HEK293 (cell line): ENCODE measurements at regions of chr14 and their contacts with region 1.

Region 1: GRCh38 chr14:50542941-50543418 is 10.6 kb upstream of the MAP4K5 start:
- H3K4me3 ChIP-seq: no peak overlapping the region
- H3K27ac ChIP-seq: no peak overlapping the region
- H3K4me1 ChIP-seq: no peaks in the 10 kb centered on the region
- CTCF ChIP-seq: peak; percentile 36; the same call in 1 of the 2 replicates

Region 2: GRCh38 chr14:50249136-50249800 is 293.7 kb before region 1 on chr14:
- CTCF ChIA-PET with region 1: no interaction called
- POLR2A ChIA-PET with region 1: no interaction called
- H3K4me3 ChIP-seq: no peak overlapping the region
- H3K27ac ChIP-seq: no peak overlapping the region
- H3K4me1 ChIP-seq: no peaks in the 10 kb centered on the region
- CTCF ChIP-seq: no peak

Region 3: DNA sequence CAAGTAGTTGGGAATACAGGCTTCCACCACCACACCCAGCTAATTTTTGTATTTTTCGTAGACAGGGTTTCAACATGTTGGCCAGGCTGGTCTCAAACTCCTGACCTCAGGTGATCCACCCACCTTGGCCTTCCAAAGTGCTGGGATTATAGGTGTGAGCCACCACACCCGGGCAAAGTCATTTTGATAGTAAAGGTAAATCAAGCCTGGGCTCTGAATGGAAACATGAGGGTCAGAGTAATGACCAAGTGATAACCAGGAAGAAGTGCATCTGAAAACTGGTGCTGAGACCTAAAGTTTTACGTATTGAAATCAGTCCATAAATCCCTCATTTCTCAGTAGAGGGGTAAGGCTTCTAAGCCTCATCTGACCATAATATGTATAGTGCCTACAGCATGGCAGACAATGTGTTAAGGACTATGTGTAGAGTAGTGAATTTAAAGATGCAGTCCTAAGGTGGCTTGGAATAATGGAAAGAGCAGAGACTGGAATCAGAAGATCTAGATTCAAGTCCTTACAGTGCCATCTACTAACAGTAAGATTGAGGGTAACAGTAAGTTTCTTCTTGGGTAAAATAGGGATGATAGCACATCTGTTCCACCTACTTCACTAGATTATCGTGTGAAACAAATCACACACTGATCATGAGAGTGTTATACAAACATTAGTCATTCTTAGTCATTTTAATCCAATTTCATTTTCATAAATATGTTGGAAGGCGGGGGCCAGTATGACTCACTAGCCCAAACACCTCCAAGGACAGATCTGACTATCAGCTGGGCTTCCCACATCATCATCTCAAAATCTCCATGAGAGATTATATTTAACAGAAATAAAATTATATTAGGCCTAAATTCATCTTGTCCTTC is 21.8 kb before region 1 on chr14:
- CTCF ChIA-PET with region 1: no interaction called
- POLR2A ChIA-PET with region 1: no interaction called
- H3K4me3 ChIP-seq: no peak overlapping the region
- H3K27ac ChIP-seq: peak overlapping the region; percentile 34; the same call in 1 of the 2 replicates
- H3K4me1 ChIP-seq: peaks cover 9% of the 10 kb centered on the region
- CTCF ChIP-seq: no peak

Region 4: DNA sequence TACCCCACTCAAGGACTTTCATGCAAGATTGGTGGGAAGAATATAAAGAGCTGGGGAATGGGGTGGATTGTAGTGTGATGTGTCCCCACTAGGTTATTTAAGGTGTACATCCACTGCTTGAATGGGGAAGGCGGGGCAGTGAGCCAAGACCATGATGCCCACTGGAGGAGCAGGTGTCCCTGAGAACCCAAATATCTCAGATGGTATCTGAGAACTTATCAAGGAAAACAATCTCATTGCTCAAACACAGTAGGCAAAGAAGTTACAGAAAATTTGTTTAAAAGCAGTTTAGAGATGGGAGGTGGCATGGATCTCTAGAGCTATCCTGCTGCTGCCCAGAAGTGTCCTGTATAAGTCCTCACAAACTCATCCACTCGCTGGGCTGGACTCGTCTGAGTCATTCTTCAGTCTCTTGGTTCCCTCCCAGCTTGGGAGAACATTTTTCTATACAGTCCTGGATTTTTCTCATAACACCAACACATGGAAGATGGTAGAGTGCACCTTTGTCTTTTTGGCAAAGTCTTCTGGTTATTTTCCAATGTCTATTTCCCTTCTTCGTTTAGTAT is 11.5 kb after region 1 on chr14:
- CTCF ChIA-PET with region 1: interaction called, 13 read pairs
- POLR2A ChIA-PET with region 1: no interaction called
- H3K4me3 ChIP-seq: no peak overlapping the region
- H3K27ac ChIP-seq: no peak overlapping the region
- H3K4me1 ChIP-seq: peaks cover 7% of the 10 kb centered on the region
- CTCF ChIP-seq: no peak

Region 5: DNA sequence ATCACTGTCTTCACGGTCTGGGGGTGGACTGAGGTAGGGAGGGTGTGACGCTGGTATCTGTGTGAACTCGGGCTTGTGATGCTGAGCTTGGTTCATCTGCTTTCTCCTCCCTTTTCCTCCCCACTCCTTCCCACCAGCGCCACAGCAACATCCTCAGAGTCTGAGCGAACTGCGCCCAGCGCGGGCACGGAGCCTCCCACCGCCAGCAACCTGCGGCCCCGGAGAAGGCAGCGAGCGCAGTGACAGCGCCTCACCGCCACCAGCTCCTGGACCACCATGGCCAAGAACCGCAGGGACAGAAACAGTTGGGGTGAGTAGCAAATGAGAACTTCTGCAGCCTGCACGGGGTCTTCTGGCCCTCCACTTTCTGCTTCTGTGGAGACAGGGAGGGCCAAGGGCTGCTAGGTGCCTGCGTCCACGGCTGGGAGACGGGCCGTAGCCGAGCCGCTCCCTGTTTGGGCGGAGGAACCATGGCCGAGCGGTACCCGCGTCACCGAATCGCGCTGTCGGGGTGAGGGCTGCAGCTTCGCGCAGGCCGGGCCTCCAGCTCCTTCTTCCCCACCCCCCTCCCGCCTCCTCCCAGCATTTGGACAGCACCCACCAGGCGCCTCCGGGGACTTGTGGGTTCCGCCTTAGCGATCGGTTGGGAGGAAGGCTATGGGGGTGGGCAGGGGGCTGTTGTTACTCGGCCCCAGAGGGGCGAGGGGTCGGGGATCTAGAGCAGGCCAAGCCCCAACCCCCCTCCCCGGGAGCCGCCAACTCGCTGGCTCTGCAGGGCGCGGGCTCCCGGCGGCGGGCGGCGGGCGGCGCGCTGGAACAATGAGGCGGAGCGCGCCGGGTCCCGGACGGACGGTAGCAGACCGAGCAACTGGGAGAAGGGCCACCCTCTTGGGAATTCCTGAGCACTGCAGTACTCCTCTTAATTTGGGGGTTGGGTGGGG is 17.3 kb after region 1 on chr14 and contains the start of gene ATL1:
- CTCF ChIA-PET with region 1: interaction called, 13 read pairs
- POLR2A ChIA-PET with region 1: interaction called, 5 read pairs
- H3K4me3 ChIP-seq: peak within 1 kb of the TSS; percentile 77
- H3K27ac ChIP-seq: peak within 1 kb of the TSS; percentile 88
- H3K4me1 ChIP-seq: peaks cover 15% of the 10 kb centered on the region
- CTCF ChIP-seq: no peak; the same call in none of the 2 replicates

Region 6: GRCh38 chr14:50778721-50779483 is 235.9 kb after region 1 on chr14:
- CTCF ChIA-PET with region 1: interaction called, 37 read pairs
- POLR2A ChIA-PET with region 1: no interaction called
- H3K4me3 ChIP-seq: no peak overlapping the region
- H3K27ac ChIP-seq: no peak overlapping the region
- H3K4me1 ChIP-seq: peaks cover 16% of the 10 kb centered on the region; the same call in 1 of the 2 replicates
- CTCF ChIP-seq: no peak